ENCODE measurements at regions of chr5 and their contacts with region 1.

Region 1: DNA sequence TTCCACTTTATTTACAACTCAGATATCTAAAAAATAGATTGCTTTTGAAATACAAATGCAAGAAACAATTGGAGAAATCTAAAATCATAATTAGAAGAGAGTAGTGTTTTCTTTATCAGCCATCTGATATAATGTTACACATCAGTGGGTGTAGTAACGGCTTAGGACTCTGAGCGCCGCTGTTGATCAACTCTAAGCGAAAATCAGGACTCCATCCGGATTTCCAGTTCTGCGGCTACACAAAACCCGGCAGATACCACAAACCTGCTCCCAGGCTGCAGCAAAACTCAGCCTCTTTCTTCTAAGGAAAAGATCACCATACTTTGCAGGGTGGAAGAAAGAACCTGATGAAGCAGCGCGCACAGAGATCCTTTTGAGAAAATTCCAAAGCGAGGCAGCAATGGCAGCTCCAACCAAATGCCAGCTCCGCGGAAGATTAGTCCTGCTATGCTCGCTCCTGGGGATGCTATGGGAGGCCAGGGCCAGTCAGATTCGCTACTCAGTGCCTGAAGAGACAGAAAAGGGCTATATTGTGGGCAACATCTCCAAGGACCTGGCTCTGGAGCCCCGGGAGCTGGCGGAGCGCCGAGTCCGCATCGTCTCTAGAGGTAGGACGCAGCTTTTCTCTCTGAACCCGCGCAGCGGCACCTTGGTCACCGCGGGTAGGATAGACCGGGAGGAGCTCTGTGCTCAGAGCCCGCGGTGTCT is at the start of gene PCDHGA9:
- H3K4me3 ChIP-seq: no peak within 1 kb of the TSS
- H3K27ac ChIP-seq: no peak within 1 kb of the TSS
- H3K4me1 ChIP-seq: no peaks in the 10 kb centered on the region
- CTCF ChIP-seq: no peak

Region 2: GRCh38 chr5:141303756-141304155 is 99.0 kb before region 1 on chr5 and contains the start of gene SLC25A2:
- CTCF ChIA-PET with region 1: no interaction called
- POLR2A ChIA-PET with region 1: no interaction called
- H3K4me3 ChIP-seq: no peak within 1 kb of the TSS
- H3K27ac ChIP-seq: no peak within 1 kb of the TSS
- H3K4me1 ChIP-seq: no peaks in the 10 kb centered on the region
- CTCF ChIP-seq: no peak

Region 3: DNA sequence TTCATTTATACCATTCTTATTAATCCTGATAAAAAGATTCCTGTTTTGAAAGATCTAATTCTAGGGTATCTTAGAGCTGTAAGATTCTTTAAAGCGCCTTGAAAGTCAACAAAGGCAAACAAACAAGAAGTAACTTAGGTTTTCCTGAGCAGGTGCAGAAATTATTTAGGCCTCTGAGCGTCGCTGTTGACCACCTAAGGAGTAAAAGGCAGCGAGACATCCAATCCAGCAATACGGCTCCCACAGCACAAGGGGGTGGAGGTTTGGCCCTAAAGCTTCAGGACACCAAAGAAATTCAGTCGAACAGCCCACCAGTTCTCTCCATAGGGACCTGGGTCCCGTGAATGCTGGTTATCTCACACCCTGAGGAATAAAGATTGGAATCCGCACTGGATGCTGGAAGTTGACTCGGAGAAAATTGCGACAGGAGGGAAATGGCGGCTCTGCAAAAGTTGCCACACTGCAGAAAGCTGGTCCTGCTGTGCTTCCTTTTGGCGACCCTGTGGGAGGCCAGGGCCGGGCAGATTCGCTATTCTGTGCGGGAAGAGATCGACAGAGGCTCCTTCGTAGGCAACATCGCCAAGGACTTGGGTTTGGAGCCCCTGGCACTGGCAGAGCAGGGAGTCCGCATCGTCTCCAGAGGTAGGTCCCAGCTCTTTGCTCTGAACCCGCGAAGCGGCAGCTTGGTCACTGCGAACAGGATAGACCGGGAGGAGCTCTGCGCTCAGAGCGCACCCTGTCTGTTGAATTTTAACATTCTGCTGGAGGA is 64.0 kb before region 1 on chr5 and contains the start of gene PCDHGA2:
- CTCF ChIA-PET with region 1: interaction called, 10 read pairs
- POLR2A ChIA-PET with region 1: no interaction called
- H3K4me3 ChIP-seq: no peak within 1 kb of the TSS
- H3K27ac ChIP-seq: no peak within 1 kb of the TSS
- H3K4me1 ChIP-seq: no peaks in the 10 kb centered on the region
- CTCF ChIP-seq: no peak

Region 4: GRCh38 chr5:141369994-141370848 is 32.5 kb before region 1 on chr5 and contains the start of gene PCDHGB3:
- CTCF ChIA-PET with region 1: interaction called, 12 read pairs
- POLR2A ChIA-PET with region 1: no interaction called
- H3K4me3 ChIP-seq: no peak within 1 kb of the TSS
- H3K27ac ChIP-seq: no peak within 1 kb of the TSS
- H3K4me1 ChIP-seq: no peaks in the 10 kb centered on the region
- CTCF ChIP-seq: no peak